ENCODE measurements at regions of chr1 and their contacts with region 1.

Region 1: GRCh38 chr1:12124693-12125421 is 41.9 kb upstream of the TNFRSF1B start:
- DNase-seq: peak; percentile 46
- H3K4me3 ChIP-seq: no peak overlapping the region
- H3K27ac ChIP-seq: no peak overlapping the region
- H3K27me3 ChIP-seq: peaks cover 8% of the 10 kb centered on the region
- CTCF ChIP-seq: peak; percentile 96

Region 2: DNA sequence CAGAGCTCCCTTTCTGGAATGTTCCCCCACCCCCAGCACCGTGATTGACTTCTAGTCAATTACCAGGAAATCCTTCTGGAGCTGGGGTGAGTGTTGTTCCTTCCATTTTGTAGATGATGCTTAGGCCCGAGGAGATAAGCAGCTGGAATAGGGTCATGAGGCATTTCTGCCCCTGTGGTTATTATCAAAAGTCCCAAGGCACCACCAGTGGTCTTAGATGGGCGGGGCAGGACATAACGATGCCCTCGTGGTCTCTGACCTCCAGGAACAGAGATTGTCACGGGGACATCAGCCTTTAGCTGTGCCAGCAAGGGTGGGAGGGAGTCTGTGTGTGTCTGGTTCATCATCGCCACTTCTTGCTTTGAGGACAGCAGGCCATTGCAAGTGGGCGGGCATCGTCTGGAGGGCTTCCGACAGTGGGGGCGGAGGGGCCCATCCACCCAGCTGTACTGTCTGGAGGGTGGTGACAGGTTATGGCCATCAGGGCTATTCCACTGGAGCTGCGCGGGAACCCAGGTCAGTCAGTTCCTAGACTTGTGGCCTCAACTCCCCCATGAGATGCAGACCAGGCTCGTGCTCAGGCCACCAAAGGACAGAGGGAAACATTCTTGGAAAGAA is 39.1 kb before region 1 on chr1:
- CTCF ChIA-PET with region 1: no interaction called
- POLR2A ChIA-PET with region 1: no interaction called
- DNase-seq: no peak
- H3K4me3 ChIP-seq: no peak overlapping the region
- H3K27ac ChIP-seq: no peak overlapping the region
- H3K27me3 ChIP-seq: no peaks in the 10 kb centered on the region
- CTCF ChIP-seq: no peak

Region 3: DNA sequence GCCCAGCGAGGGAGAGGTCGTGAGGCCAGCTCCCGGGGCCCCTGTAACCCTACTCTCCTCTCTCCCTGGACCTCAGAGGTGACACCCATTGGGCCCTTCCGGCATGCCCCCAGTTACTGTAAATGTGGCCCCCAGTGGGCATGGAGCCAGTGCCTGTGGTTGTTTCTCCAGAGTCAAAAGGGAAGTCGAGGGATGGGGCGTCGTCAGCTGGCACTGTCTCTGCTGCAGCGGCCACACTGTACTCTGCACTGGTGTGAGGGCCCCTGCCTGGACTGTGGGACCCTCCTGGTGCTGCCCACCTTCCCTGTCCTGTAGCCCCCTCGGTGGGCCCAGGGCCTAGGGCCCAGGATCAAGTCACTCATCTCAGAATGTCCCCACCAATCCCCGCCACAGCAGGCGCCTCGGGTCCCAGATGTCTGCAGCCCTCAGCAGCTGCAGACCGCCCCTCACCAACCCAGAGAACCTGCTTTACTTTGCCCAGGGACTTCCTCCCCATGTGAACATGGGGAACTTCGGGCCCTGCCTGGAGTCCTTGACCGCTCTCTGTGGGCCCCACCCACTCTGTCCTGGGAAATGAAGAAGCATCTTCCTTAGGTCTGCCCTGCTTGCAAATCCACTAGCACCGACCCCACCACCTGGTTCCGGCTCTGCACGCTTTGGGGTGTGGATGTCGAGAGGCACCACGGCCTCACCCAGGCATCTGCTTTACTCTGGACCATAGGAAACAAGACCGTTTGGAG is 18.2 kb after region 1 on chr1:
- CTCF ChIA-PET with region 1: interaction called, 17 read pairs
- POLR2A ChIA-PET with region 1: no interaction called
- DNase-seq: no peak
- H3K4me3 ChIP-seq: no peak overlapping the region
- H3K27ac ChIP-seq: peak overlapping the region; percentile 84
- H3K27me3 ChIP-seq: peaks cover 2% of the 10 kb centered on the region
- CTCF ChIP-seq: no peak

Region 4: GRCh38 chr1:12177999-12178441 is 53.2 kb after region 1 on chr1:
- CTCF ChIA-PET with region 1: interaction called, 59 read pairs
- POLR2A ChIA-PET with region 1: interaction called, 4 read pairs
- DNase-seq: peak; percentile 81
- H3K4me3 ChIP-seq: no peak overlapping the region
- H3K27ac ChIP-seq: peak overlapping the region; percentile 68
- H3K27me3 ChIP-seq: no peaks in the 10 kb centered on the region
- CTCF ChIP-seq: no peak

Region 5: GRCh38 chr1:12208764-12209494 is 84.1 kb after region 1 on chr1:
- CTCF ChIA-PET with region 1: interaction called, 237 read pairs
- POLR2A ChIA-PET with region 1: no interaction called
- DNase-seq: peak; percentile 48
- H3K4me3 ChIP-seq: no peak overlapping the region
- H3K27ac ChIP-seq: no peak overlapping the region
- H3K27me3 ChIP-seq: peaks cover 6% of the 10 kb centered on the region
- CTCF ChIP-seq: peak; percentile 87

Region 6: DNA sequence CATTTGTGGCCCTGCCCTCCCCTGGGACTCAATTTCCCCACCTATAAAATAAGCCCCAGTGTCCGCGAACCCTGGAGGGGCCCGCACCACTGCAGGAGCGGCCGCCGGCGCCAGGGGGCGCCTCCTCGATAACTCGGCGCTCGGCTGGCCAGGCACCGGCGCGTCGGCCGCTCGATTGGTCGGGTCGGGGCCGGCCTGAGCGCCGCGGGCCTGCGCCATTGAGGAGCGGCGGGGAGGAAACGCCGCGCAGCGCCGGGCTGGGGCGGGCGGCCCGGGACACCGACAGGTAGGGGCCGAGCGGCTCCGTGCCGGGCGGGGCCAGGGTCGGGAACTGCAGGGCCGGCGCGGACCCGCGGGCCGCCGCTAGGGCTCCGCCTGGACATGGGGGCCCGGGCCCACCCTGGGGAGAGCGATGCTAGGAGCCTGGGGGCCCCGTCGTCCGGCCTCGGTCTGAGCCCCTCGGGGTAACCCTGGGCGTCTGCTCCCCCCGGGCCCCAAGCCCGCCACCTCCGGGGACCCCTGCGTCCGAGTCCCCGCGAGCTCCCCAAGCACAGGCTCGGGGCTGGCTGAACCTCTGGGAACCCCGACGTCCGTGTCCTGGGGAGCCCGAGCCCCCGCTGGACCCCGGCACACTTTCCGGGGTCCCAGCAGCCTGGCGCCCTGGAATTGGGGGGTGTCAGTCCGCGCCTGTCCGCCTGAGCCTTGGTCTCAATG is 105.1 kb after region 1 on chr1 and contains the start of gene VPS13D:
- CTCF ChIA-PET with region 1: interaction called, 16 read pairs
- POLR2A ChIA-PET with region 1: no interaction called
- DNase-seq: peak; percentile 21
- H3K4me3 ChIP-seq: peak within 1 kb of the TSS; percentile 91
- H3K27ac ChIP-seq: no peak within 1 kb of the TSS
- H3K27me3 ChIP-seq: peaks cover 6% of the 10 kb centered on the region
- CTCF ChIP-seq: peak; percentile 86
- polyA plus RNA-seq, gene VPS13D: 18.3 and 19.0 TPM in 2 replicates

Region 7: GRCh38 chr1:12778907-12779306 is 654.0 kb after region 1 on chr1:
- CTCF ChIA-PET with region 1: no interaction called
- POLR2A ChIA-PET with region 1: no interaction called
- DNase-seq: no peak
- H3K4me3 ChIP-seq: no peak overlapping the region
- H3K27ac ChIP-seq: no peak overlapping the region
- H3K27me3 ChIP-seq: no peaks in the 10 kb centered on the region
- CTCF ChIP-seq: no peak